Activated CD4-positive, alpha-beta T cell treated with anti-CD3 and anti-CD28 coated beads, Interleukin-2, amount 10 ng/mL, durations not matched to agents 24 days and 14 days (primary cell): ENCODE measurements at regions of chr5 and their contacts with region 1.

Region 1: GRCh38 chr5:88833371-88834130 is 49.4 kb downstream of the MEF2C start:
- DNase-seq: peak; percentile 73
- H3K4me3 Mint-ChIP-seq: no peak overlapping the region
- H3K27ac Mint-ChIP-seq: no peak overlapping the region
- H3K4me1 Mint-ChIP-seq: peaks cover 16% of the 10 kb centered on the region
- H3K27me3 Mint-ChIP-seq: peaks cover 2% of the 10 kb centered on the region

Region 2: DNA sequence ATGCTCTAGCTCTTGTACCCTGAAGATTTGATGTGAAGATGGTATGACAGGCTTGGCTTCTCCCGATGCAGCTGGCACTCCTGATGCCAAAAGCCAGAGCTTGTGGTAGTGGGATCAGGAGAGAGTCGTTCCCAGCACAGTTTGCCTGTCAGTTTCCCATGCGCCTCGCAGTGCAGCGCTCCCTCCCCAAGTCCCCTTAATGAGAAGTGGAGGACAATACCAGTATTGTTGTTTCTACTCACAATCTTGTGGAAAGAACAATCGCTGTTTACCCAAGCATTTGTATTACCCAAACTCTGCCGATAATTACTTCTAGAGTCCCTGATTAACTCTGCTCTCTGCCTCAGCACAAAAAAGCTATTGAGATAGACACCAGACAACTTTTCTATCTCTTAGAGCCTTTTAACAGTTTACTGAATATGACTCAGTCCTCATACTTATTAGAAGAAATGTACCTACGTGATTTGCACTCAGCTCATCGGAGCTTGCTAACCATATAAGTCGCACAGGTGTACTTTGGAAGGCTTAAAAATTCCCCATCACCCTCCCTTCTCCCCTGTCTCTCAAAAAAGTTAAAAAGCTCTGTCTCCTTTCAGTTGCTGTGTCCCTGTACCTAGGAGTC is 281.7 kb before region 1 on chr5:
- intact Hi-C with region 1: no loop called
- DNase-seq: no peak
- H3K4me3 Mint-ChIP-seq: no peak overlapping the region
- H3K27ac Mint-ChIP-seq: no peak overlapping the region
- H3K4me1 Mint-ChIP-seq: no peaks in the 10 kb centered on the region
- H3K27me3 Mint-ChIP-seq: peaks cover 6% of the 10 kb centered on the region

Region 3: GRCh38 chr5:88785391-88786219 is 47.9 kb before region 1 on chr5:
- intact Hi-C with region 1: loop called (anchors 2 kb)
- DNase-seq: no peak
- H3K4me3 Mint-ChIP-seq: no peak overlapping the region
- H3K27ac Mint-ChIP-seq: no peak overlapping the region
- H3K4me1 Mint-ChIP-seq: peaks cover 11% of the 10 kb centered on the region
- H3K27me3 Mint-ChIP-seq: no peaks in the 10 kb centered on the region

Region 4: GRCh38 chr5:88845081-88845697 is 11.6 kb after region 1 on chr5:
- intact Hi-C with region 1: loop called (anchors 1 kb)
- DNase-seq: no peak
- H3K4me3 Mint-ChIP-seq: no peak overlapping the region
- H3K27ac Mint-ChIP-seq: no peak overlapping the region
- H3K4me1 Mint-ChIP-seq: peaks cover 4% of the 10 kb centered on the region
- H3K27me3 Mint-ChIP-seq: peaks cover 6% of the 10 kb centered on the region

Region 5: DNA sequence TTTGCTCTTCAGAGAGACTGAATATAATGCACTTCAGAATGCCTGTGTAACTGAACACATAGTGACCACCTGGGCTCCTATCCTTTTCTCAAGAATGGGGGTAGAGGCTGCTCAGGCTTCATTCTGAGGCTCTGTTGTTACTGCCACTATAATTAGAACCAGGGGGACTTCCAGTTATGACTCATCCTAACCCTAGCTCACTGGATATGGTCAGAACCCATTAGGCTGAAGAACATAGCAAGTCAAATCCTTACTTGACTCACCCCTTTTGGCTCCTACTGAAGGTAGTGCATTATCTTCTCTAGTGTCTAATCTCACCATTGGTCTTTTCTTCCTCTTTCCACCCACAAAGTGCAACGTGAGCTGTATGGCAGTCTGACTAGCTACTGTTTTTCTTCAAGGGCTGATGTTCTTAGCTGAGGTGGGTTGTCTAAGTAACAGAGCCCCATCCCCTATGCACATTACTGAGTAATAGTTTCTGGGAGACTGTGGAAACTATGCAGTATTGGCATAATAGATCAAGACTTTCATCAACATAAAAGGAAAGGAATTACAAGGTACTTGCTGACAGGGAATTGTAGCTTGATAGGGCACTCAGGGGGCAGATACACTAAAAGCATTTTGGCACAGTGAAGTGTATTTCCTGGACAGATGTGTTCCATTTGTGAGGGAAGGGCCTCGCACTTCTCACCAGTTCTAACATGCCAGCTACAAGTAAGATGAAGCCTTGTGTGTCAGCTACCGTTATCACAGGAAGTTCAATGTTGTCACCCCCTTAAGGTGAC is 480.4 kb after region 1 on chr5:
- intact Hi-C with region 1: loop called (anchors 1 kb)
- DNase-seq: peak; percentile 58
- H3K4me3 Mint-ChIP-seq: no peak overlapping the region
- H3K27ac Mint-ChIP-seq: peak overlapping the region; percentile 65
- H3K4me1 Mint-ChIP-seq: peaks cover 5% of the 10 kb centered on the region
- H3K27me3 Mint-ChIP-seq: no peaks in the 10 kb centered on the region

Region 6: DNA sequence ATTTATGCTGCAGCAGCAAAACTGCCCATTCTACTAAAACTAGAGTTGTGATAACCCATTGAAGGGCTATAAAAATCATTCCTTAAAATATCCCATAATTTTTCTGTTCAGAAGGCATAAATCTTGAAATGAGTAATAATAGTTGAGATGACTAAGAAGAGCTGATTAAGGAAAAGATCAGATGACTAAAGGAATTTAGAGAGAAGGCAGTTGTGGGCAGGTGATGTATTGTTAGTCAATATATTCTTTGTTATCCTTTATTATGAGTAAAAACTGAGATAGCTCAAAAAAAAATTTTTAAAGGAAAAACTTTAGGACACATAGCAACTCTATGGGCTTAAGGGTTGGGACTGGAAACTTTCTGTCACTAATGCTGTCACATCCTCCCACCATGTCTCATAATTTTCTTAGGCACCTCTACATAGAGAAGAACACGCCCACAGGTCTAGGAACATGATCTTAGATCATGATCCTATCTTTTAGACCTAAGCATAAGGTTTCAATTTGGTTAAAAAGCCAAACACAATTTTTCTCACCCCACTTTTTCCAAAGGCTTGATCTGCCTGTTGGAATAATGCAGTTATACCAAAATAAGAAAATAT is 647.0 kb after region 1 on chr5:
- intact Hi-C with region 1: no loop called
- DNase-seq: no peak
- H3K4me3 Mint-ChIP-seq: no peak overlapping the region
- H3K27ac Mint-ChIP-seq: no peak overlapping the region
- H3K4me1 Mint-ChIP-seq: no peaks in the 10 kb centered on the region
- H3K27me3 Mint-ChIP-seq: no peaks in the 10 kb centered on the region